Activated CD4-positive, alpha-beta T cell treated with anti-CD3 and anti-CD28 coated beads for 36 hours (primary cell): ENCODE measurements at regions of chr5 and their contacts with region 1.

Region 1: DNA sequence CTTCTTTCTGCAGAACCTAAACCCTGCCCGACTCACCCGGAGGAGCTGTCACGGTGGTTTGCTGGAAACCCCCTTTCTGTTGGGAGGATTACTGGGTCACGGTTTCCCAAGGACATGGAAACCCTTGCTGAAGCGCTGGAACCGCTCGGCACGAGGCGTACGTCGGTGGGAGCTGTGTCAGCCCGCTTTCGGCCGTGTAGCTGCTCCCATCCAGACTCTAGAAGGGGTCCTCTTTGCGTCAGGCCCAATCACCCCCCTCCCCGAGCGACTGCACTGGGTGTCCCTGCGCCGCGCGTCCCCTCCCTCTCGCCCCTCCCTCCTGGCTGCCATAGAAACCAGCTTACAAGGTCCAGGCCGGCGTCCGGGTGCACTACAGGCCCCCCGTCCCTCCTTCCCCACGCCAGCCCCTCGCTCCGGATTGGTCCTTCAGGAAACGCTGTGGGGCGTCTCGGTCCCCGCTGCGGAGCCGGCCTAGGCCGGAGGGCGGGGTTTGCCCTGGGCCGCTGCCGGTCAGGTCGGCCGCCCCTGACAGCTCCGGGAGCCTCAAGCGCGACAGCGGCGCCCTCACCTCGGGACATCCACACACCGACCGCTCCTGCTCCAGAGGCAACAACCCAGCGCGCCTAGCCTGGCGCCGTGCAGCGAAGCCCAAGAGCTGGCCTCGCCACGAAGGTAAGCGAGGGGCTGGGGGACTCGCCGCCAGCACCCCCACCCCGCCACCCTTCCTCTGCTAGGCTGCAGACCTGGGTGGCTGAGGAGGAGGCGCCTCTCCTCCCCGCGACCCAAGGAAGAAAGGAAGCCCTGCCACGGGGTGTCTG is at the start of gene NIM1K:
- DNase-seq: peak; percentile 65
- ATAC-seq: peak; percentile 32
- H3K4me3 Mint-ChIP-seq: peak within 1 kb of the TSS; percentile 79
- H3K27ac Mint-ChIP-seq: peak within 1 kb of the TSS; percentile 73
- H3K4me1 Mint-ChIP-seq: peaks cover 32% of the 10 kb centered on the region
- H3K27me3 Mint-ChIP-seq: peaks cover 16% of the 10 kb centered on the region
- total RNA-seq, gene NIM1K: 2.1 to 2.3 TPM

Region 2: DNA sequence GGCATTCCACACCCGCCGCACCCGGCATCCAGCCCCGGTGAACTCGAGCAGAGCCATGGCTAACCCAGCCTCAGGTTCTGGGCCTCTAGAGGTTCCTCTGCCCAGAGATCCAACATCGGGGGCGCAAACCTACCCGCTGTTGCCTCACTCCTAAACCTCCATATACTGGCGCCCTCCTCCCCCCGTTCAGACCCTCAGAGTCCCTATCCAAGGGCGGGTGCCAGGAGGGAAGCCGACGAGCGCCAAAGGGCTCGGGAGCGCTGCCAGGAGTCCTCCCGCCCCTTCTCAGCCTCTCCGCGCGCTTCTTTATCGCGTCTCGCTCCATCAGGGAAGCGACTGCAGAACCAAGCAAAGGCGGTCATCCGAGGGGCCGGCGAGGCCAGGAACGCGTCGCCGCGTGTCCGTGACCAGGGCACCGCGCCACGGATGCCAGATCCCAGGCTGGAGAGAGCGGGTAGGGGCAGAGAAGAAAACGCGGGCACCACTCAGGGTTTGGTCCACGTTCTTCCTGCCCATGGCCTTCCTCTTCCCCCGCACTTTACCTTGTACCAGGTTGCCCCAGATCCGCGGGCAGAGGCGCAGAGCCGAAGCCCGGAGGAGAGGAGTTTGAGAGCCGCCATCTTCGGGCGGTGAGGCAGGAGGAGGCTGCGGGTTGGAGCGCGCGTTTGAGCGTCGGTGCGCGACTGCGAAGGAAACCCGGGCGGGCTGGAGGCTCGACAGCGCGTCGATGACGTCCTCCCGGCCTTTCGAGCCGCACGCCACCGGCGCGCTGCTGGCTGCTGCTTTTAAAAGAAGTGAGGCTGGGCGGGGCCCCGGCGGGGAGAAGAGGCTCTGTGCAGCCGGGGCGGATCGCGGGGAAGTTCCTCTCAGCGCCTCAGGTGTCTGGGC is 1322.0 kb before region 1 on chr5 and contains the start of gene OXCT1:
- CTCF ChIA-PET with region 1: no interaction called
- POLR2A ChIA-PET with region 1: no interaction called
- intact Hi-C with region 1: loop called in 1 of 2 experiments (anchors 10 kb)
- DNase-seq: peak; percentile 96
- ATAC-seq: peak; percentile 92
- H3K4me3 Mint-ChIP-seq: peak within 1 kb of the TSS; percentile 91
- H3K27ac Mint-ChIP-seq: peak within 1 kb of the TSS; percentile 94
- H3K4me1 Mint-ChIP-seq: peaks cover 54% of the 10 kb centered on the region
- H3K27me3 Mint-ChIP-seq: no peaks in the 10 kb centered on the region
- total RNA-seq, gene OXCT1: 70.3 to 91.4 TPM

Region 3: DNA sequence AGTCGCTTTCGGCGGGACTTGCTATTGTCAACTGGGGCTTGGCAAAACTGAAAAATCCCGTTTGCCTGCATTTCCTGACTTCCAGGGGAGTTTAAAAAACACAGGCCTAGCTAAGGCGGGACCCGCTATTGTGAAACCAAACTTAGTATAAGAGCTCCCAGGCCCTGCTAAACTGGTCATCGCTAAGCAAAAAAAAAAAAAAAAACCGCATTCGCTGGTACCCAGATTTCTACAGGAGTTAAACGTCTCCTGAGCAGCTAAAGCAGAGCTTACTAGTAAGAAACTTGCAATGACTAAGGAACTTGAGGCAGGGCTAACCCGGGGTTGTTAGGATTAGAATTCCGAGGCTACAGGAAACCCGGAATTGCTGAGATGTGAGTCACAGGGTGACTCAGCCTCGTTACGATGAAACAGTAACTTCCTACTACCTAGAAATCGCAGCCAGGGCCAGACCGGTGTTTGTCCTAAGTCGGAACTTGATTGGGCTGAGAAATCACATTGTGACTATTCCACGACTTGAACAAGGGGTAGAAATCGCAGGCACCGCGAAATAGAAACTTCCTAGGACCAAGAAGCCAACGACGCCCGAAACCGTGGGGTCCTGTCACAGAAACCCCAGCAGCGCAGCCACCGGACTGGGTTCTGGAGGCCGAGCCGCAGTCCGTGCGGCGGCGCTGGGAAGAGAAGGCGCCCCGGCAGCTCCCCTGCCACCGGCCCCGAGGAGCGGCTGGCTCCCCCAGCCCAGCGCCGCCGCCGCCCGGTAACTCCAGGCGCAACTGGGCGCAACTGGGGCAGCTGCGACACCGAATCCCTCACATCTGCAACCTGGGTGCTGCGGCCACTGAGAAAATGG is 241.3 kb before region 1 on chr5:
- CTCF ChIA-PET with region 1: interaction called, 3 read pairs
- POLR2A ChIA-PET with region 1: no interaction called
- intact Hi-C with region 1: loop called (anchors 2 kb)
- DNase-seq: peak; percentile 82
- ATAC-seq: peak; percentile 59
- H3K4me3 Mint-ChIP-seq: peak overlapping the region; percentile 83
- H3K27ac Mint-ChIP-seq: peak overlapping the region; percentile 91
- H3K4me1 Mint-ChIP-seq: peaks cover 17% of the 10 kb centered on the region
- H3K27me3 Mint-ChIP-seq: no peaks in the 10 kb centered on the region

Region 4: GRCh38 chr5:43019614-43020293 is 172.2 kb before region 1 on chr5:
- CTCF ChIA-PET with region 1: no interaction called
- POLR2A ChIA-PET with region 1: no interaction called
- intact Hi-C with region 1: loop called in 1 of 2 experiments (anchors 5 kb)
- DNase-seq: peak; percentile 91
- ATAC-seq: peak; percentile 70
- H3K4me3 Mint-ChIP-seq: peak overlapping the region; percentile 94
- H3K27ac Mint-ChIP-seq: peak overlapping the region; percentile 99
- H3K4me1 Mint-ChIP-seq: peaks cover 33% of the 10 kb centered on the region
- H3K27me3 Mint-ChIP-seq: no peaks in the 10 kb centered on the region

Region 5: GRCh38 chr5:43105369-43106289 is 86.3 kb before region 1 on chr5:
- CTCF ChIA-PET with region 1: interaction called, 6 read pairs
- POLR2A ChIA-PET with region 1: no interaction called
- intact Hi-C with region 1: loop called (anchors 1 kb)
- DNase-seq: peak; percentile 93
- ATAC-seq: peak; percentile 91
- H3K4me3 Mint-ChIP-seq: peak overlapping the region; percentile 71
- H3K27ac Mint-ChIP-seq: peak overlapping the region; percentile 91
- H3K4me1 Mint-ChIP-seq: peaks cover 43% of the 10 kb centered on the region
- H3K27me3 Mint-ChIP-seq: no peaks in the 10 kb centered on the region

Region 6: DNA sequence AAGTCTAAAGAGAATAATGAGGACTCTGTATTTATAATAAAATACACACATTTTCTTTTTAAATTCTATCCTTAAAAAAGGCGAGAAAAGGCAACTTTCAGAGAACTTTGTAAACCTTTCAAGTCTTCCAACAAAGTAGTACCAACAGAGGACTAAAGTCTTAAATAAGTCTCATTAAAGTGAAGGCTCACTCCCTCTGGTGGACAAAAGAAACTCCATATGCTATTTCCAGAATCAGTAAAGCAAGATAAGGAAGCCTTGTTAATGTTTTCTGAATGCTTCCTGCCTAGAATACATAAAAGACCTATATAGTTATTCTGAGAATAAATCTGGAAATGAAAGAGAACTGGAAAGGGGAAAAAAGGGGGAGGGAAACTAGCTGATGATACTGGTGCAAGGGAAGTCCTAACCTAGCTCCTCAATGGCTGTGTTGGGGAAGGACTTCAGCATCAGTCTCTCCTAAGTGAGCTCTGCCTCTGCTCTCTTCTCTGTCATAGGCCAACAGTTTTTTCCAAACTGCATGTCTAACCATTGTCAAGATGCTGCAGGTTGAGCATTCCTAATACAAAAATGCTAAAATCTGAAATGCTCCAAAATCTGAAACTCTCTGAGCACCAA is 114.1 kb after region 1 on chr5:
- CTCF ChIA-PET with region 1: interaction called, 3 read pairs
- POLR2A ChIA-PET with region 1: no interaction called
- intact Hi-C with region 1: loop called (anchors 1 kb)
- DNase-seq: no peak
- ATAC-seq: peak; percentile 37
- H3K4me3 Mint-ChIP-seq: peak overlapping the region; percentile 12
- H3K27ac Mint-ChIP-seq: peak overlapping the region; percentile 63
- H3K4me1 Mint-ChIP-seq: peaks cover 80% of the 10 kb centered on the region
- H3K27me3 Mint-ChIP-seq: no peaks in the 10 kb centered on the region

Region 7: DNA sequence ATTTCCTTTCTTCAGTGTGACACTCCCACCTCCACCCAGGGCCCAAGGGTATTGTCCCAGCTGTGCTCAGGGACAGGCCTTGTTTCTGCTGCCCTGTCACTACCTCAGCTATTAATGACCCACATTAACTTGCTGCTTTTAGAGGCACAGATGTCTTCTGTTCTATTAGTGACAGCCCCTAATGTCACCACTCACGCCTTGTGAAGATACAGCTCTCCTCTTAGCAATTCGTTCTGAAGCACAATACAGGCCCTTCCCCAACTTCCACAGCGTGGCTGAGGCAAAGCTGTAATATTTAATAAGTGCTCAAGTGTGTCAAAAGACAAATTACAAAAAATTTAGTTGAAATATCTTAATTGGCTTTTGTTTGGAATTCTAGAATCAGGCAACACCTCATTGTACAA is 165.9 kb after region 1 on chr5:
- CTCF ChIA-PET with region 1: no interaction called
- POLR2A ChIA-PET with region 1: no interaction called
- intact Hi-C with region 1: no loop called
- DNase-seq: no peak
- ATAC-seq: no peak
- H3K4me3 Mint-ChIP-seq: no peak overlapping the region
- H3K27ac Mint-ChIP-seq: no peak overlapping the region
- H3K4me1 Mint-ChIP-seq: no peaks in the 10 kb centered on the region
- H3K27me3 Mint-ChIP-seq: no peaks in the 10 kb centered on the region

Region 8: GRCh38 chr5:43556857-43557542 is 365.1 kb after region 1 on chr5 and contains the start of gene PAIP1:
- CTCF ChIA-PET with region 1: no interaction called
- POLR2A ChIA-PET with region 1: no interaction called
- intact Hi-C with region 1: loop called in 1 of 2 experiments (anchors 1 kb)
- DNase-seq: peak; percentile 91
- ATAC-seq: peak; percentile 87
- H3K4me3 Mint-ChIP-seq: peak within 1 kb of the TSS; percentile 88
- H3K27ac Mint-ChIP-seq: peak within 1 kb of the TSS; percentile 99
- H3K4me1 Mint-ChIP-seq: peaks cover 18% of the 10 kb centered on the region
- H3K27me3 Mint-ChIP-seq: peaks cover 2% of the 10 kb centered on the region
- total RNA-seq, gene PAIP1: 51.7 to 55.1 TPM